Thyroid gland (tissue), 4 donors: ENCODE measurements at regions of chr6 and their contacts with region 1.

Region 1: DNA sequence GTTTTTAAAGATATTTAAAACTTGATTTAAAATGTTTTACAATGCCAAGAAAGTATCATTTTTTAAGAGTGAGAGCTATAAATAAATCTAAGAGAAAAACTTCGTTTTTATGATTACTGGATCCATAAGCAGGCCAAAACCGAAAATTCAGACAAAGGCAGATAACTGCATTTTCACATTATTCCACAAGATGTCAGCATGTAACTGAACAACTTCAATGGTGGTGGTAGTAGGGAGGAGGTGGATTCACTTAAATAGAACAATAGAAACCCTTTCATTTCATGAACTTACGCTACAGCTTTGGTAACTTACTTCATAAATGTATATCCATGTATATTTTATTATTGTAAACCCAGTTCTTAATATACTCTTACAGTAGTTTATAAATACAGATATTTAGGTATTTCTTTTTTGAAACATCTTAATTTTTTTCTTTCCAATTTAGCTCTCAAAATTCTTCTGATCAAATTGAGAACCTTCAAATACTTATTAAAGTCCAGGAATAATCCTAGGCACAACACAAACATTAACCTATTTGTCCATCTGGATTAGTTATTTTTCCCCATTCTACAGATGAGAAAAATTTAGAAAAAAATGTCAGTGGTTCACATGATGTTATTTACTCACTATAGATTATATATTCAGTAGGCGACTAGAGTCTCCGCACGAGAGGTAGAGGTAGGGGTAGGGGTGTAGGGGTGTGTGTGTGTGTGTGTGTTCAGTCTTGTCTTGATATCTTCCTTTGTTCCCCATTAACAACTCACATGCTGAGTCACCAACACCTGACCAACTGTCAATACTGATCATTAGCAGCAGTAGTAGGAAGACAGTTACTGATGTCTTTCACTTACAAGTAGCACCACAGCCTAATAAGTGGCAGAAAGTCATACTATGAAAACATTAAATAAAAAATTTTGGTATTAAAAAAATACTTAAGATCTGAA is 111.5 kb downstream of the ARHGAP18 start:
- DNase-seq: no peak
- H3K4me3 ChIP-seq: no peak overlapping the region
- H3K27ac ChIP-seq: no peak overlapping the region
- H3K4me1 ChIP-seq: no peaks in the 10 kb centered on the region
- H3K27me3 ChIP-seq: no peaks in the 10 kb centered on the region
- CTCF ChIP-seq: peak; percentile 56 to 97 (median 82)
- POLR2A ChIP-seq: no peak

Region 2: GRCh38 chr6:129555206-129555832 is 43.2 kb before region 1 on chr6:
- intact Hi-C with region 1: no loop called
- DNase-seq: no peak
- H3K4me3 ChIP-seq: no peak overlapping the region
- H3K27ac ChIP-seq: no peak overlapping the region
- H3K4me1 ChIP-seq: no peaks in the 10 kb centered on the region
- H3K27me3 ChIP-seq: no peaks in the 10 kb centered on the region
- CTCF ChIP-seq: no peak
- POLR2A ChIP-seq: no peak

Region 3: DNA sequence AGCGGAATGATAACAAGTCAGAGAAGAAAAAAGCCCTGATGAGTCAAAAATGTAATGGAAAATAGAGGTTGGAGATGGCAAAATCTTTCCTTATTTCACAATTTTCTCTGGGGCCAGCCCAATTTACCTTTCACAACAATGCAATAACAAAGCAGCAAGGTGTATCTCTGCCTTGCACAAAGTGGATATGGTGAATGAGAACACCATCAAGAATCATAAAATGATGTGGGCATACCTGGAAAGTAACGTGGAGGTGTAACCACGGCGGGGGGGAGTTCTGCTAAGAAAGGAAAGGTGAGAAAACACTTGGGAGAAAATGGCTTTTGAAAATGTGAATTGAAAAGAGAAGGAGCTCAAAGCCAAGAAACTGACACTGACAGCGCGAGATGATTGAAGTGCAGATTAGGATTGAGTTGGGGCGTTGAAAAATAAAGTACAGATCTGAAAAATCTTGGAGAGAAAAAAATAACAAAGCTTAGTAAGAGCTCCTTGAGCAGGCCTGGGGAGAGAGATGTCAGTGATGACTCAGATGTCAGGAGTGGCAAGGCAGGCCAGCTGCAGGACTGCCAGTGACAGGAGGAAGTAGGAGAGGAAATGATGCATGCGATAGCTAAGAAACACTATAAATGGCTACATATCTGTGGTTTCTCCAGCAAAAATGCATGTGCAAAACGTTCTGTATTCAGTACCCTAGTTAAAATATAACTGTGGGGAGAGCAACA is 85.2 kb after region 1 on chr6:
- intact Hi-C with region 1: no loop called
- DNase-seq: peak; percentile 80 to 81
- H3K4me3 ChIP-seq: no peak overlapping the region
- H3K27ac ChIP-seq: peak overlapping the region; percentile 84 to 94 (median 87)
- H3K4me1 ChIP-seq: peaks cover 13 to 26% of the 10 kb centered on the region in 2 donors
- H3K27me3 ChIP-seq: no peaks in the 10 kb centered on the region
- CTCF ChIP-seq: no peak
- POLR2A ChIP-seq: peak in 1 of 2 donors; percentile 19

Region 4: DNA sequence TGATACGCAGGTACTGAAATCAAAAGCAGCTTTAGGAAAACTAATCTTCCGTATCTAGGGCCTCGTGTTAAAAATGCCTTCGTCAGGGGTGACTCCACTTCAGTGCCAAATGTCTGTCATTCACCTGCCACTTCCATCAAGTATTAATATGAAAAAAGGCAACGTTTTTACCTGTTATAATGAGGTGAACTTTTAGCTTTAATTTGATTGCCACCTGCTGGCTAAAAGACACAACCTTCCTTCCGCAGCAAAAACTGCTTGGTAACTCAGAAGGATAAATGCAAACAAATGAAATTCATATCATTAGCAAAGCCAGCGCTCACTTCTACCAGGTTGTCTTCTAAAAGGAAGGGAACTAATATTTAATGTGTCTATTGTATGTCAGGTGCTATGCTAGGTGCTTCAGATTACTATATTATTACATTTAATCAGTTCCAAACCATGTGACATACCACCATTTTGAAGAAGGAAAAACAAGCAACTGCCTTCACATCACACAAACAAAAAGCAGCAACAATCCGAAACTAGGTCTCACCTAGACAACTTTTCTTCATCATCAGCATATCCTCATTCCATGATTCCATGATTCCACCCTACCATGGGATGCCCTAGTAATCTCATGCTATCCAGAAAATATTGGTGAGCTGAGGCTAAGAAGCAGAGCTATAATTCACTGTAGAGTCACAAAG is 132.1 kb after region 1 on chr6:
- intact Hi-C with region 1: loop called (anchors 5 kb)
- DNase-seq: peak in 1 of 2 donors; percentile 20
- H3K4me3 ChIP-seq: no peak overlapping the region
- H3K27ac ChIP-seq: no peak overlapping the region
- H3K4me1 ChIP-seq: no peaks in the 10 kb centered on the region
- H3K27me3 ChIP-seq: no peaks in the 10 kb centered on the region
- CTCF ChIP-seq: peak; percentile 31 to 82 (median 64)
- POLR2A ChIP-seq: no peak

Region 5: DNA sequence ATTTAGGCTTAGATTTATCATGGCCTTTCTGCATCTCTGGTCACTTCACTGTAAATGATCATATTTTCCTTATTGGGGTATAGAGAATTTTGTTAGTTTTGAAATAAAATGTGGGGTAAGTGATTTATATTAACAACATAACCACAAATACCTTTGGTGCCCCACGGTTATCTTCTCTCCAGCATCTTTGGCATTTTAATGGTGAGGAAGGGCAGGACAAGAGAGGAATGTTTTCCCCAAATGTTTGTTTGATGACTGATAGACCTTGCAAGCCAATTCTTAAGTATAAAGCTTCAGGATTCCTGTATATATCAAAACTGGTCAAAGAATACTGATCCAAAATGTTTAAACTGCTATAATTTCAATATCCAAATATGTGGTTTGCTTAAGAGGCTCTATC is 1057.1 kb after region 1 on chr6:
- intact Hi-C with region 1: no loop called
- DNase-seq: no peak
- H3K4me3 ChIP-seq: no peak overlapping the region
- H3K27ac ChIP-seq: no peak overlapping the region
- H3K4me1 ChIP-seq: no peaks in the 10 kb centered on the region
- H3K27me3 ChIP-seq: no peaks in the 10 kb centered on the region
- CTCF ChIP-seq: no peak
- POLR2A ChIP-seq: no peak